Activated B cell treated with CpG ODN at 0.5 μM for 24 hours (primary cell): ENCODE measurements at regions of chr14 and their contacts with region 1.

Region 1: DNA sequence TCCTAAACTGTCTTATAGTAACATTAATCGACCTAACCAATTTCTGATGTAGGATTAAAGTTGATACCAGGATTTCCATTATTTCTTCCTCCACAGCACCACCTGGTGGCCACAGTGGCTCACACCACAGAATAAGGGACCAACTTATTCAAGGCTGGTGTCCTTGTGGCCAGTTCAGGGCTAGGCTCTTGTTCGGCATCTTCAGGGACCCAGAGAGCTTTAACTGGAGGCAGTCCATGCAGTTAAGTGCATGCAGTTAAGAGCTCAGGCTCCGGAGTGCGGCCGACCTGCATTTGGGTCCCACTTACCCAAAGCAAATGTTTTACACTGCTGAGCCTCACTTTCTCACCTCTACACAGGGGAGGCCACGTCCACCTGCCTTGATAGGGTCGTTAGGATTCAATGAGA is 42.0 kb upstream of the GPR68 start:
- DNase-seq: peak; percentile 64
- ATAC-seq: peak; percentile 88
- H3K4me3 Mint-ChIP-seq: no peak overlapping the region
- H3K27ac Mint-ChIP-seq: no peak overlapping the region
- H3K4me1 Mint-ChIP-seq: peaks cover 24% of the 10 kb centered on the region
- H3K27me3 Mint-ChIP-seq: no peaks in the 10 kb centered on the region
- CTCF ChIP-seq: peak; percentile 90

Region 2: GRCh38 chr14:91228112-91229004 is 58.2 kb before region 1 on chr14:
- CTCF ChIA-PET with region 1: interaction called, 4 read pairs
- POLR2A ChIA-PET with region 1: no interaction called
- intact Hi-C with region 1: loop called (anchors 1 kb)
- DNase-seq: peak; percentile 53
- ATAC-seq: peak; percentile 88
- H3K4me3 Mint-ChIP-seq: peak overlapping the region; percentile 63
- H3K27ac Mint-ChIP-seq: peak overlapping the region; percentile 89
- H3K4me1 Mint-ChIP-seq: peaks cover 71% of the 10 kb centered on the region
- H3K27me3 Mint-ChIP-seq: no peaks in the 10 kb centered on the region
- CTCF ChIP-seq: no peak